ENCODE measurements at regions of chr2 and their contacts with region 1.

Region 1: DNA sequence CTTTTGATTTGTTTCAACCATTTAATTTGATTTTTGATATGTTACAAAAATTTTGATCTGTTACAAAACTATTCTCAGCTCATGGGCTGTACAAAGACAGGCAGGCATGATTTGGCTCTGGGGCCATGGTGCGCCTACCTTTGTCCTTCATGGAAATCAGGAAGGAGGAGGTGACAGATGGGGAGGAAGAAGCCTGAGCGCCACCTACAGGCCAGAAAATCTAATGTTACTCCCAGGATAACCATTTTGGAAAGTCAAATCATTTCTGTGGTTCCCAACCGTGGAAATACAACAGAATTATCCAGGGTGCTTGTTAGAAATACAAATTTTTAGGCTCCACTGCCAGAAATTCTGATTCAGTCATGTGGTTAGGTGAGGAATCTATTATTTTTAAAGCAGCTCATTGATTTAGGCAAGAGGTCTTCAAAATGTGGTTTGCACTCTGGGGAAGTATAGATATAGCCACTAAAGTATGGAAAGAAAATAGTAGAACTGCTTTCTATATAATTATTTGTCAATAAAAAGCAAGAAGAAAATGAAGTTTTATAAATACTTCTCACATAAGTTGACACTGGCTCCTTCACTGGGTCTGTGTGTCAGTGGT is 93.9 kb downstream of the EVA1A start:
- DNase-seq: no peak
- H3K4me3 ChIP-seq: no peak overlapping the region
- H3K27ac ChIP-seq: no peak overlapping the region
- H3K27me3 ChIP-seq: no peaks in the 10 kb centered on the region
- CTCF ChIP-seq: peak; percentile 59

Region 2: GRCh38 chr2:75199428-75200011 is 267.3 kb before region 1 on chr2 and contains the start of gene TACR1:
- CTCF ChIA-PET with region 1: interaction called, 10 read pairs
- POLR2A ChIA-PET with region 1: no interaction called
- DNase-seq: peak; percentile 56
- H3K4me3 ChIP-seq: peak within 1 kb of the TSS; percentile 62
- H3K27ac ChIP-seq: no peak within 1 kb of the TSS
- H3K27me3 ChIP-seq: peaks cover 21% of the 10 kb centered on the region
- CTCF ChIP-seq: peak; percentile 88
- polyA plus RNA-seq, gene TACR1: 0.14 and 0.30 TPM in 2 replicates

Region 3: GRCh38 chr2:75614056-75614710 is 147.4 kb after region 1 on chr2:
- CTCF ChIA-PET with region 1: interaction called, 245 read pairs
- POLR2A ChIA-PET with region 1: no interaction called
- DNase-seq: no peak
- H3K4me3 ChIP-seq: no peak overlapping the region
- H3K27ac ChIP-seq: no peak overlapping the region
- H3K27me3 ChIP-seq: no peaks in the 10 kb centered on the region
- CTCF ChIP-seq: no peak

Region 4: GRCh38 chr2:75627895-75628504 is 161.2 kb after region 1 on chr2:
- CTCF ChIA-PET with region 1: interaction called, 106 read pairs
- POLR2A ChIA-PET with region 1: interaction called, 5 read pairs
- DNase-seq: no peak
- H3K4me3 ChIP-seq: no peak overlapping the region
- H3K27ac ChIP-seq: no peak overlapping the region
- H3K27me3 ChIP-seq: peaks cover 8% of the 10 kb centered on the region
- CTCF ChIP-seq: peak; percentile 99

Region 5: GRCh38 chr2:75640621-75641121 is 173.9 kb after region 1 on chr2:
- CTCF ChIA-PET with region 1: interaction called, 25 read pairs
- POLR2A ChIA-PET with region 1: no interaction called
- DNase-seq: peak; percentile 33
- H3K4me3 ChIP-seq: no peak overlapping the region
- H3K27ac ChIP-seq: no peak overlapping the region
- H3K27me3 ChIP-seq: peaks cover 14% of the 10 kb centered on the region
- CTCF ChIP-seq: peak; percentile 100

Measured in AG04450 (cell line).